ENCODE measurements at regions of chr11 and their contacts with region 1.

Region 1: DNA sequence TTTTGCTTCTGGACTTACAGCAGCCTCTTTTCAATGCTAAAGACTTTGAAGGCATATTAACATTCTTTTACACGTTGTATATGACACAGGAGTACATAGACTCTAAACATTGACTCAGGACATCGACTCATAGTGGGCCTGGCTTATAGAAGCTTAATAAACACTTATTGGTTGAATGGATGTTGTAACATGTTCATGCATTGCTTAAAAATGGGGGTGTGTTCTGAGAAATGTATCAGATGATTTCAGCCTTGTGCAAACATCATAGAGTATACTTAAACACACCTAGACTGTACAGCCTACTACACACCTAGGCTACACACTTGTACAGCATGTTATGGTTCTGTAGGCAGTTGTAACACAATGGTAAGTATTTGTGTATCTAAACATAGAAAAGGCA is 17.9 kb downstream of the TTC17 start:
- DNase-seq: peak; percentile 83
- H3K4me3 Mint-ChIP-seq: no peak overlapping the region
- H3K27ac Mint-ChIP-seq: peak overlapping the region; percentile 84
- H3K4me1 Mint-ChIP-seq: peaks cover 9% of the 10 kb centered on the region
- H3K27me3 Mint-ChIP-seq: no peaks in the 10 kb centered on the region
- CTCF ChIP-seq: no peak

Region 2: GRCh38 chr11:43358801-43359421 is 17.7 kb before region 1 on chr11 and contains the start of gene TTC17:
- CTCF ChIA-PET with region 1: interaction called, 4 read pairs
- POLR2A ChIA-PET with region 1: interaction called, 45 read pairs
- intact Hi-C with region 1: no loop called
- DNase-seq: peak; percentile 93
- H3K4me3 Mint-ChIP-seq: peak within 1 kb of the TSS; percentile 98
- H3K27ac Mint-ChIP-seq: peak within 1 kb of the TSS; percentile 97
- H3K4me1 Mint-ChIP-seq: peaks cover 11% of the 10 kb centered on the region
- H3K27me3 Mint-ChIP-seq: no peaks in the 10 kb centered on the region
- CTCF ChIP-seq: no peak
- total RNA-seq, gene TTC17: 92.7 and 94.5 TPM in 2 replicates

Region 3: GRCh38 chr11:43447151-43447550 is 70.6 kb after region 1 on chr11:
- CTCF ChIA-PET with region 1: no interaction called
- POLR2A ChIA-PET with region 1: no interaction called
- intact Hi-C with region 1: no loop called
- DNase-seq: no peak
- H3K4me3 Mint-ChIP-seq: no peak overlapping the region
- H3K27ac Mint-ChIP-seq: no peak overlapping the region
- H3K4me1 Mint-ChIP-seq: no peaks in the 10 kb centered on the region
- H3K27me3 Mint-ChIP-seq: no peaks in the 10 kb centered on the region
- CTCF ChIP-seq: no peak